ENCODE measurements at regions of chr2 and their contacts with region 1.

Region 1: DNA sequence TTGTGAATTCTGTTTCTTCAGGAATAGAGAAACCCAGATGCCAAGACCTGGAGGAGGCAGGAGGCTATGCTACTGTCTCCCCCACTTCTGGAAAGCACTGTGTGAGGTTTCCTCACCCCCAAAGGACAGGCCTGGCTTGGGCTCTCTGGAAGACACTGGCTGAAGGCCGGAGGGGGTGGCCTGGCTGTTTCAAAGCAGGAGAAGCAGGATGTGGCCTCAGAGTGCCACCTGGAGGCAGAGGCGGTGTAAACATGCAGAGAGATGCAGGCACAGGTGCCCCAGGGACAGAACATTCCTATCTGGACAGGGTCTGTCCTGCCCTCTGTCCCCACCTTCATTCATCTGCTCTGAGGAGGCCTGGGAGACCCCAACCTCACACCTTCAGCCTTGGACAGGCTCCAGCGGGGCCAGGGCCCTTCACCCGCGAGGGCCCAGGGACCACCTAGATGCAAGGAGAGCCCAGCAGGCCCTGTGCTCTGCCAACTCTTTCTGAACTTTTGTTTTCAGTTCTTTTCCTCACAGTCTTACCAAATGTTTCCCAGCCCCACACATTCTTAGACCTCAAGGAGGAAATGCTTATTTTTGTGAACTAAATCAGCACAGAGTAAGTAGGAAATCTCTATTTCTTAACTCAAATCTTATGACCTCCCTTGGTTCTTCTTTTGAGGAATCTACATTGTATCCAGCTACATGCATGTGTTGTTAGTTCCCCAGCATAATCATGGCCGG is 79.2 kb downstream of the LONRF2 start:
- H3K4me3 Mint-ChIP-seq: no peak overlapping the region
- H3K27ac Mint-ChIP-seq: peak overlapping the region; percentile 64
- H3K4me1 Mint-ChIP-seq: peaks cover 31% of the 10 kb centered on the region
- H3K27me3 Mint-ChIP-seq: peaks cover 4% of the 10 kb centered on the region

Region 2: DNA sequence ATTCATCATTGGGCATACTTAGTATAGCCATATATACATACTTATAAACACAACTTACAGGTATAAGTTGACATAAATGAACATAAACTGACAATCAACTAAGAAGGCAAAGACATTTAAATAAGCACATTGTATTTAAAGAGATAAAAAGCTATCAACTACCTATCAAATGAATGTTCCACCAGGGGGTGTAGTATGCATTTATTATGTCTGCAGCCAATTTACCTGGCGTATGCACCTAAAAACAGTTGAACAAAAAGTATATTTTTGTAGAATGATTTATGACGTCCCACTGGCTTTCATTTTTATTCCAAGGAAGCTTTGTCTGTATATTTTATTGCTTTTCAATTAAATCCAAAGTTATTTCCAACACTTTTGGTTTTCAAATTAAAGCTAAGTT is 424.2 kb before region 1 on chr2:
- intact Hi-C with region 1: loop called (anchors 10 kb)
- H3K4me3 Mint-ChIP-seq: no peak overlapping the region
- H3K27ac Mint-ChIP-seq: no peak overlapping the region
- H3K4me1 Mint-ChIP-seq: peaks cover 17% of the 10 kb centered on the region
- H3K27me3 Mint-ChIP-seq: no peaks in the 10 kb centered on the region

Region 3: GRCh38 chr2:99949530-99949929 is 293.5 kb before region 1 on chr2:
- intact Hi-C with region 1: no loop called
- H3K4me3 Mint-ChIP-seq: no peak overlapping the region
- H3K27ac Mint-ChIP-seq: no peak overlapping the region
- H3K4me1 Mint-ChIP-seq: no peaks in the 10 kb centered on the region
- H3K27me3 Mint-ChIP-seq: no peaks in the 10 kb centered on the region

Measured in dendritic cell treated with granulocyte-macrophage colony-stimulating factor and Interleukin-4, amounts not matched to agents 40 ng/mL and 50 ng/mL, for 4 days (primary cell).